ENCODE measurements at regions of chr6 and their contacts with region 1.

Region 1: GRCh38 chr6:108312605-108313004 is 17.8 kb downstream of the AFG1L start:
- DNase-seq: no peak
- CTCF ChIP-seq: no peak

Region 2: DNA sequence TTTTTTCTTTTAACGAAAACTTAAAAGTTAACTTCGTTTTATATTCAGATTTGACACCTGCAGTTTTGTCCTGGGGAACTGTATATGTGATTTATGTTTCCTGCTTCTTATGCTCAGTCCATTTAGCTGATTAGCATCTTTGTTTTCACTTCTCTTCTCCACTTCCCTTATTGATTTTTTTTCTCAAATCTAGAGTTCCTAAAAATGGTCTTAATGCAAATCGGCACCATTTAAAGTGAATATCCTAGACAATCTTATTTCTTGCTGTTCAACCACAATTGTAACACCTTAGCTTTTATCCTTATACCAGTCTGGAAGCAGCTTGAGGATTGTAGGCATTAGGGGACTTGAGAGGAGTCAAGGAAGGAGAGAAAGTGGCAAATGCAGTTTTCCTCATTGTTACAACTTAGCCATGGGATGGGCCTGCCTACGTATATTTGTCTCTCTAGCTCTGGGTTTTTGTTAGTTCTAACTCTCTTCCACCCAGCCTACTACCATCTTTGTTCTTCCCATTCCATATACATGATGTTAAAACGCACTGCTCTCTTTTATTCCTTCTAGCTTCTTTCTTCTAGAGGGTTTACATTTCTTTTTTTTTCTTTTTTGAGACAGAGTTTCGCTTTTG is 1674.8 kb before region 1 on chr6:
- CTCF ChIA-PET with region 1: no interaction called
- POLR2A ChIA-PET with region 1: no interaction called
- DNase-seq: peak; percentile 48
- CTCF ChIP-seq: no peak

Region 3: GRCh38 chr6:108294727-108295625 is 17.6 kb before region 1 on chr6 and contains the start of gene AFG1L:
- CTCF ChIA-PET with region 1: interaction called, 15 read pairs
- POLR2A ChIA-PET with region 1: no interaction called
- DNase-seq: peak; percentile 89
- CTCF ChIP-seq: no peak

Measured in GM10248 (cell line).